Activated T-helper 1 cell treated with anti-CD3 and anti-CD28 coated beads, Interleukin-12 subunit alpha, Interleukin-12 subunit beta, Interleukin-2, Interleukin-4 antibody, amounts not matched to agents 30 ng/mL and 10 ng/mL and 1 ng/mL, durations not matched to agents 14 hours and 24 hours and 36 hours (primary cell): ENCODE measurements at regions of chr7 and their contacts with region 1.

Region 1: DNA sequence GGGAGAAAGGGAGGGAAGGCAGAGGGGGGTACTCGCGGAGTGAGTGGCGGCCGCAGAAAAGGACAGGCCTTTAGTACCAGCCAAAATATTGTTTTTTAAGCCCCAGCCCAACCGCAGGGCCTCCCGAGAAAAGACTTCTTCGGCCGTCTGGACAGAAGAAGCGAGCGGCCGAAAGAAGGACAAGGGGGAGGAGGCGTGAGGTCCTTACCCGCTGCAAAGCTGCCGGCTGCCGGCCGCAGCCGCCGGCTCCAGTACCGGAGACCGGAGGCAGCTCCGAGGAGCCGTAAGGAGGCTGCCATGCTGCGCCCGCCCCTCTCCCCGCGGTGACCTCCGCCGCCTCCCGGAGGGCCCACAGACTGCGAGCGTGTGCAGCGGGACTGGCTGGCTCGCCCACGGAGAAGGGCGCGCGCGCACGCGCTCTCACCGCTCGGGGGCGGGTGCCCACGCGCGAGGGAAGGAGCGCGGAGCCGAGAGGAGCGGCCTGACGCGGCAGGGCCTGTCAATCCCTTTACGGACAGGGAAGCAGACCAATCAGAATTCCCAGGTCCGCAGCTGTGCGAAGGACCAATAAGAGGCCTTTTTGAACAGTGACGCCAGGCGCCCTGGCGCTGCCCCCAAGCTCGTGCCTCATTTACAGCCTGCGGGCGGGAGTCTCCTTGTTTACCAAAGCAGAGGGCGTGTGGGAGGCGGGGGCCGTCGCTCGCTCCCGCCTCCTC is at the start of gene HIBADH:
- DNase-seq: peak; percentile 96
- H3K4me3 Mint-ChIP-seq: peak within 1 kb of the TSS; percentile 86
- H3K27ac Mint-ChIP-seq: peak within 1 kb of the TSS; percentile 81
- H3K4me1 Mint-ChIP-seq: peaks cover 30% of the 10 kb centered on the region
- H3K27me3 Mint-ChIP-seq: no peaks in the 10 kb centered on the region
- total RNA-seq, gene HIBADH: 21.0 and 21.2 TPM in 2 replicates

Region 2: DNA sequence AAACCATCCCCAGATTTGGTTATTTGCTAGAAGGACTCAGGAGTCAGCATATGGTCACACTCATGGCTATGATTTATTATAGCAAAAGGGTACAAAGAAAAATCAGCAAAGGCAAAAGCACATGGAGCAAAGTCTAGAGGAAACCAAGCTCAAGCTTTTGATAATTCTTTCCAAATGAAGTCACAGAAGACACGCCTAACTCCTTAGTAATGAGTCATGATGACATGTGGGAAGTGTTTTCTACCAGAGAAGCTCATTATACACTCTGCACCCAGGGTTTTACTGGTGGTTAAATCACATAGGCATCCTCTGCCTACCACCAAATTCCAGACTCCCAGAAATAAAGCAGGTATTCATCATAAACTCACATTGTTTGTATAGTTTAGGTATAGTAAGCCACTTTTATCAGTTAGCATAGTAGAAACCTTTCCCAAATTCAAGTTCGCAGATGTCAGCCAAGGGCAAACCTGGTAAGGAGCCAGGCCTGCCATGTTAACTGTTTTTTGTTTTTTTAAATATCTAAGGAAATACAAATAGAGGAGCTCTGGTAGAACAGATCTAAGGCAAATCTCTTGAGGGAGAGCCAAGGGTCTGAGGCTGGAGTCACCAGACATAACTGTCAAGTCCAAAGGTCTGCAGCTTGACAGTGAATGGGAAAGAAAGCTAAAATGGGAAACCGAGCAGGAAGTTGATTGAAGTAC is 15.4 kb after region 1 on chr7:
- intact Hi-C with region 1: loop called (anchors 1 kb)
- DNase-seq: no peak
- H3K4me3 Mint-ChIP-seq: no peak overlapping the region
- H3K27ac Mint-ChIP-seq: no peak overlapping the region
- H3K4me1 Mint-ChIP-seq: peaks cover 9% of the 10 kb centered on the region
- H3K27me3 Mint-ChIP-seq: no peaks in the 10 kb centered on the region